ENCODE measurements at regions of chr20 and their contacts with region 1.

Region 1: DNA sequence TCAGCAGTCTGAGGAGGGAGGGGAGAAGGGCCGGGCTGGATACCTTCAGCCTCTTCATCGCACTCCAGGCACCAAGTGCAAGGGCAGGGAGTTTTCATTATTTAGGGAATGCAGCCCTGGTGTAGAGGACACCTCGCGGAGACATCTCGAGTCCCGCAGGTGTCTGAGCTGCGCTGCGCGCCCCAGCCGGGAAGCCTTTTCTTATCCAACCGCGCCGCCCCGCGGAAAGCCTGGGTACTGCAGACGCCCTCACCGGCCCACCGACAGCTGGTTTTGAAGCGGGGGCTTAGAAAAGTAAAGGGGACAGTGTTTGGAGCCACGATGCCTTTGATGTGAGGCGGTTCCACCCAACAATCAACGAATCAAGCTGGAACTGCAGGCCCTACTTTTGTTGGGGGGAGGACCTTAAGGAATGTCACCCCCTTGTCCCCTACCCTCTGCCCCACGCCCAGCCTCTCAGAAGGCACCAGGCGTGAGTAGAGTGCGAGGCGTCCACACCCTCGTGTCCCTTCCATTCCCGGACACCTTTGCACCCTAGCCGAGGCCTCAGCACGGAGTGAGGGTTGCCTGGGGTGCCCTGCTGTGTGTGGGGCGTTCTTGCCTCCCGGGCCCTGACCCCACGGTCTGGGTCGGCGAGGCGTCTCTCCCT is 8.6 kb downstream of the NKX2-2 start:
- DNase-seq: peak; percentile 68 to 92
- ATAC-seq: peak; percentile 71
- H3K4me3 ChIP-seq: no peak overlapping the region
- H3K27ac ChIP-seq: no peak overlapping the region
- H3K4me1 ChIP-seq: no peaks in the 10 kb centered on the region
- H3K27me3 ChIP-seq: peaks cover 0 to 3% of the 10 kb centered on the region in 2 donors

Region 2: DNA sequence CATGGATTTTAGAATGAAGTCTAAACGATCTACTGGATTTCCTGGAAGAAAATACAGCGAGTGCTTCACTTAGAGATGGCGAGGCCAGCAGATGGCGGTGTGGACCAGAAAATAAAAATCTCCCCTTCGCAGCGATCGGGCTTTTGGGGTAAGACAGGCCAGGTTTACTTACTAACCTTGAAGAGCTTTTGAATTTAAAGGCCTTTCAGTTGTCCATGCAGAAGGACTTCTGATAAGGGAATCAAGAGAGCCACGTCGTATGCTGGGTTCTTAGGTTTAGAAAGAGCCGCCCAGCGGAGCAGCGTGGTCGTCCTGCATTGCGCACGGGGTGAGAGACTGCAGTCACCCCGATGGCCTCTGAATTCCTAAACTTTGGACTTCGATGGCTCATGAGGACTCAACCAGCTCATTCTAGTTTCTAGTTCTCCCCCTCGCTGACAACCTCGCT is 667.7 kb before region 1 on chr20:
- intact Hi-C with region 1: loop called in 1 of 2 experiments (anchors 2 kb)
- DNase-seq: peak; percentile 53 to 81
- ATAC-seq: no peak
- H3K4me3 ChIP-seq: no peak overlapping the region
- H3K27ac ChIP-seq: no peak overlapping the region
- H3K4me1 ChIP-seq: no peaks in the 10 kb centered on the region
- H3K27me3 ChIP-seq: no peaks in the 10 kb centered on the region

Region 3: DNA sequence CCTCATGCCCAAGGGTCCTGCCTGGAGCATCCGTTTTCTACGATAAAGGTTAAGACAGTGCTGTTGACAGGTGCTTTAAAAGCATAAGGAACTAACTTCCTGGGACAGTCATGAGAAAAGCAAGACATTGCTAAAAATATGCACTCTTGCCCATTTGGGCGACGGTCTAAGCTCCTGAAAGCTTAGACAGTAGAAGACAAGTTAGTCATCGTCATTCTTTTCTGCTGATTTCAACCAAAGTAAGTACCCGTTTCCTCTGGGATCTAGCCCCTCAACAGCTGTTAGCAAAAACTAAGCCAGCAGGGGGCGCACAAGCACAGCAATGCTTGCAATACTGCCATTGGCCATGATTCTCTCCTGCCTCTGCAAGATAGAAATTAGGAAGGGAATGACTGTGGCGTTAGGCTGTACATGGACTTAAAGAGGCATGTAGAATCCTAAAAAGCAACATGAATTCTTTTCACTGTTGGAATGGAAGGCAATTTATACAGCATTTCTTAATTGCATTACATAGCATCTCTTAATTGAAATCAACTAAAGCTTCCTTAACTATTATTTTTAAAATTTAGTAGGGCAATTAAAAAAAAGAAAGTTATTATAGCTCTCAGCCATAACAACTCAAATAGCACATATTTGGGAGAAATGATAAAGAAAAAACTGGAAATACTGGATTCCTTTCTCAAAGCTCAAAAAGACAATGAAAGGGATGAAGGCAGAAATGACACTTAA is 645.0 kb before region 1 on chr20:
- intact Hi-C with region 1: loop called in 1 of 2 experiments (anchors 2 kb)
- DNase-seq: peak; percentile 89 to 94
- ATAC-seq: peak; percentile 81
- H3K4me3 ChIP-seq: no peak overlapping the region
- H3K27ac ChIP-seq: no peak overlapping the region
- H3K4me1 ChIP-seq: no peaks in the 10 kb centered on the region
- H3K27me3 ChIP-seq: no peaks in the 10 kb centered on the region

Region 4: DNA sequence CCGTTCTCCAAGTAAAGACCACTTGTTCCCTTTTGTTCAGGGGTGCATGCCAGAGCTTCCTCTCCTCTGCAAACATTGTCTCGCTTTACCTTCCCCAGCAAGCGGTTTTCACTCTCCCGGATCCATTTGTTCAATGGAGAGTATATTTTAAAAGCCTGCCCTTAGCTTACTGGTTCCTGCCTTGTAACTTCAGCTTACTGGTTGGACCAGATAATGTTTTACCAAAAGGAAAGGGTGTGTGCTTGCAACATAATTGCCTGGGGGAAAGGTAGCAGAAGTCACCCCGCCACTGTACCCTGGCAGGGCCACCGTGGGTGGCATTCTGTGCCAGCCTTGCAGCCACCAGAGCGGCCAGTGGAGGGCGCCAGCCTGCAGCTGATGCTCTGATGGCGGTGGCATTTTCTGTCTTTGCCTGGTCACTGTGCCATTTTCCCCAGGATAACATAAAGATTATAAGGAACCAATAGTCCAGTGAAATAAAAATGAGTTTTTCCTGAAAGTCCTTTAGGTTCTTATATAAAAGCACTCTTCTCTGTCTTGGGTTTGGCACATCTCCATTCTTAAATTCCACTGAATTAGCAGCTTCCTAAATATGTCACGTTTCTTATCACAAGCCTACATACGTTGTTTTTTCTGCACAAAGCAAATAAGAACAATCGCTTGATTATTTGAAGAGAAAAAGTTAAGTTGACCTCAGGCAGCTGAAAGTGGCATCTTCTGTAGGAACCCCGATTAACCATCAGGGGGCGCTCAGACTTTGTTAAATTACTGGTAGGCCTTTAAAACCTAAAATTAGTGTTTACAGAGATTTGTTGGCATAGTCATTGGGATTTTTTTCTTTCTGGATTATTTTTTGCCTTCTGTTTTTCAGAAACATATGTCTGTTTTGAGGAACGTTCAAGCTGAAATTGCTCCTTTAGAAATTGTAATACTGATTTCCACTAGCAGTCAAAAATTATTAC is 269.5 kb before region 1 on chr20:
- intact Hi-C with region 1: loop called (anchors 1 to 5 kb)
- DNase-seq: peak; percentile 56 to 84
- ATAC-seq: peak; percentile 84
- H3K4me3 ChIP-seq: no peak overlapping the region
- H3K27ac ChIP-seq: no peak overlapping the region
- H3K4me1 ChIP-seq: no peaks in the 10 kb centered on the region
- H3K27me3 ChIP-seq: no peaks in the 10 kb centered on the region